ENCODE measurements at regions of chr22 and their contacts with region 1.

Region 1: DNA sequence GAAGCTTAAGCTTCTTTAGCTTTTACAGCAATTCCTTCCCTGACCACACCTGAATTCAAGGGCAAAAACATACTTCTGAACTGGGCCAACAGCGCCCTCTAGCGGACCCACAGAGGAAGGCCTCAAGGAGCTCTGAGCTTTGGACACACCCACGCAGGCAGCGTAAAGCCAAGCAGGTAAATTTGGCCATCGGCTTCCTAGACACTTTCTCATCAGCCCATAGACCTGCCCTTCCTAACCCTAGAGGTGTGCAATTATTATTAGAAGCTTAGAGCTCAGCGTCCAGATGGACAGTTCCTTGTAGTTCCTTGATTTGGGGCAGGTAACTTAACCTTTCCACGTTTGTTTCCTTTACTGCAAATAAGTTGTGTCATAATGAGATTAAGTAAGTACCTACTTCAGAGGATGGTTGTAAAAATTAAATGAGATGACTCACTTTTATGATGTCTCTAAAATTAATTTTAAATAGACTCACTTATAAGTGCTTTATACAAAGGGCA is 25.7 kb upstream of the HMGXB4 start:
- DNase-seq: peak; percentile 59
- H3K4me3 Mint-ChIP-seq: no peak overlapping the region
- H3K27ac Mint-ChIP-seq: no peak overlapping the region
- H3K4me1 Mint-ChIP-seq: no peaks in the 10 kb centered on the region
- H3K27me3 Mint-ChIP-seq: peaks cover 27% of the 10 kb centered on the region

Region 2: DNA sequence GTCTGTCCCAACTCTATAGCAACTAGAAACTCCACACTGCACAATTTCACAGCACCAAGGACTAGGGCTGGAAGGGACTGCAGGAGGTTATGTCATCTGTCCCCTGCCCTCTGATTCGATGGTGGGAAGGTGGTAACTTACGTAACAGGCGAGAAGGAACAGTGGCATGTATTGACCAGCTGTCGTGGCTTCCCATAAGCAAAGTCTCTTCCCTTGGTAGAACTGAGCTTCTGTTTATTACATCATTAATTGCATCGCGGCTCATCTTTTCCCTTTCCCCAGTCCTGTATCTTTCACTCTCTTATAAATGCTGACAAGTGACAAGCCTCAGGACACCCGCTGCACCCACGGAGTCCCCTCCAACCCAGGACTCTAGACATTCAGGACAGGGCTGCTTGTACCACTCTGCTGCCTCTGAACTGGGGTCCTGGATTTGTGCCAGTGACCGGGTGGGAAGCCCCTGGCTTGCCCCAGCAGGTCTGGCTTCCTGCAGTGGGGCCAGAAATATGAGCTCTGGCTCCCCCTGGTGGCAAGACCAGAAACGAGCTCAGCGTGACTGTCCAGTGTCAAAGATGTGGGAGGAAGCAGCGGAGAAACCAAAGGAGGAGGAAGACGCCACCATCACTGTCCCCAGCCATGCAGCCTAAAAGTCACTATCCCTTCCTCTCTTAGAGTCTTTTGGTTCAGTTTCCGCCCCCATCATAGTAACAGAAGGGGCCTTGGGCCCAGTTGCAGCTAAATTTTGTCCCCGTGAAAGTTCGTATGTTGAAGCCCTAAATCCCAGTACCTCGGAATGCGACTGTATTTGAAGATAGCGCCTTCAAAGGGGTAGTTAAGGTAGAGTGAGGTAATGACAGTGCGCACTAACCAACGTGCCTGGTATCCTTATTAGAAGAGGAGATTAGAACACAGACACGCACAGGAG is 81.2 kb before region 1 on chr22:
- intact Hi-C with region 1: loop called (anchors 10 kb)
- DNase-seq: peak; percentile 35
- H3K4me3 Mint-ChIP-seq: no peak overlapping the region
- H3K27ac Mint-ChIP-seq: no peak overlapping the region
- H3K4me1 Mint-ChIP-seq: peaks cover 6% of the 10 kb centered on the region
- H3K27me3 Mint-ChIP-seq: peaks cover 3% of the 10 kb centered on the region

Measured in activated T-helper 1 cell treated with anti-CD3 and anti-CD28 coated beads, Interleukin-12 subunit alpha, Interleukin-12 subunit beta, Interleukin-2, Interleukin-4 antibody, amounts not matched to agents 30 ng/mL and 10 ng/mL and 1 ng/mL, durations not matched to agents 14 hours and 24 hours and 36 hours (primary cell).